A673 (cell line): ENCODE measurements at regions of chr15 and their contacts with region 1.

Region 1: DNA sequence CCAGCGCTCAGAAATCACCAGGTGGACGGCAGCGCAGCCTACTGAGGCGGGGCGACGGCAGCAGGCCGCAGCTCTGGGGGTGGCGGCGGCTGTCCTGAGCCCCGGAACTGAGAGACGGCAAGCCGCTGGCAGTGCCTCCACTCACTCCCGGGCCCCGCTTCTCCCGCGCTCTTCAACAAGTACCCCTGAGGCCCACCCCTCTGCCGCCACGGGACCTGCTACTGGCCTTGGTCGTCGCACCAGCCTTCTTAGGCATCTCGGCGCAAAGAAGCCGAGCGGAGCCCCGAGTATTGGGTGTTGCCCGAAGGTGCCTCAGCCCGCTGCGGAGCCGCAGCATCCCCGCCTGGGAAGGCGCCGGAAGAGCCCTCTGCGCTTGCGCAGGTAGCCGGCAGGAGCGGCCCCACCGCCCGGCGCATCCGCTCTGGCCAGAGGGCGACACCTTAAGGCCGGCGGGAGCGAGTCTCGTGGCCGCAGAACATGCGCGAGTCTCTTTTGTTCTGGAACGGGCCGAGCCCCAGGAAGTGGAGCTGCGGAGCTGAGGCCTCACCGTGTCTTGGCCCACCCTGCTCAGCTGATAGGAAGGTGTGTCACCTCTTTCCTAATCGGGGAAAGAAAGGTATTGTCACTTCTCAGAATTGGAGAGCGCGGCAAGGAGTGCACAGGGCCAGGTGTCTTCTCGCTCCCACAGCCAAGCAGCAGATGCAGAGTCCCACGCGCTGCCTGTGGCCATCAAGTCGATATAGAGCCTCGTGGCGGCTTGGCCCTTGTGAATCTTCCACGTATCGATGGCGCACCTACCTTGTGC is at the start of gene C15orf40:
- DNase-seq: peak; percentile 88
- H3K4me3 ChIP-seq: peak within 1 kb of the TSS; percentile 83
- H3K27ac ChIP-seq: peak within 1 kb of the TSS; percentile 62
- H3K4me1 ChIP-seq: peaks cover 17% of the 10 kb centered on the region
- H3K27me3 ChIP-seq: no peaks in the 10 kb centered on the region
- CTCF ChIP-seq: peak; percentile 69
- total RNA-seq, gene C15orf40: 20.6 and 30.6 TPM in 2 replicates

Region 2: GRCh38 chr15:82909080-82909815 is 102.2 kb before region 1 on chr15:
- CTCF ChIA-PET with region 1: no interaction called
- POLR2A ChIA-PET with region 1: no interaction called
- intact Hi-C with region 1: no loop called
- DNase-seq: no peak
- H3K4me3 ChIP-seq: no peak overlapping the region
- H3K27ac ChIP-seq: no peak overlapping the region
- H3K4me1 ChIP-seq: no peaks in the 10 kb centered on the region
- H3K27me3 ChIP-seq: peaks cover 7% of the 10 kb centered on the region
- CTCF ChIP-seq: no peak

Region 3: GRCh38 chr15:83108266-83109226 is 97.1 kb after region 1 on chr15:
- CTCF ChIA-PET with region 1: no interaction called
- POLR2A ChIA-PET with region 1: no interaction called
- intact Hi-C with region 1: loop called (anchors 5 kb)
- DNase-seq: peak; percentile 58
- H3K4me3 ChIP-seq: peak overlapping the region; percentile 58
- H3K27ac ChIP-seq: no peak overlapping the region
- H3K4me1 ChIP-seq: peaks cover 10% of the 10 kb centered on the region
- H3K27me3 ChIP-seq: no peaks in the 10 kb centered on the region
- CTCF ChIP-seq: no peak

Region 4: GRCh38 chr15:83207622-83208411 is 196.3 kb after region 1 on chr15 and contains the start of gene HDGFL3:
- CTCF ChIA-PET with region 1: interaction called, 4 read pairs
- POLR2A ChIA-PET with region 1: no interaction called
- intact Hi-C with region 1: loop called (anchors 2 kb)
- DNase-seq: peak; percentile 71
- H3K4me3 ChIP-seq: peak within 1 kb of the TSS; percentile 86
- H3K27ac ChIP-seq: peak within 1 kb of the TSS; percentile 85
- H3K4me1 ChIP-seq: peaks cover 3% of the 10 kb centered on the region
- H3K27me3 ChIP-seq: peaks cover 5% of the 10 kb centered on the region
- CTCF ChIP-seq: peak; percentile 26; the same call in 1 of the 2 replicates
- total RNA-seq, gene HDGFL3: 103 TPM in 2 replicates

Region 5: DNA sequence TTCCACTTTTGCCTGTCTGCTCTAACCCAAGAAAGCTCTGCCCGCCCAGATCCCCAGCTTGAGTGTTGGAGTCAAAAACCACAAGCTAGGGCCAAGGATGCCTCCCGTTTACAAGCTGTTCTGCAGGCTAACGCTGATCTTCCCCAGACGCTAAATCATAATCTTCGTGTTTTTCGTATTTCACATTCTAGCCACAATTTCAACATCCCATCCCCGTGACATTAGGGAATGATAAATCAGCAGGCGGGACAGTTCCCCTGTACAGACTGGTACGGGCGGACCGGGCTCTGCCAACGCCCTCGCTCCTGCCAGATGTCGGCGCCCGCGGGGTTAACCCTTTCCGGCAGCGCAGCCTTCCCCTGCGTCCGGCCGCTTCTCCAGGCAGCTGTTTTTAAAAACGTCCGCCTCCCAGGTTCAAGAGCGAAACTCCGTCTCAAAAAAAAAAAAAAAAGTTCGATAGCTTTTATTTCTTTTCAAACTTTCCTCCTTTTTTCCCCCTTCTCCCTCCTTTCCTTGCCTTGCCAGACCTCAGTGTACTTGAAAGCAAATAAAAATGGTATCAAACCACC is 354.0 kb after region 1 on chr15:
- CTCF ChIA-PET with region 1: no interaction called
- POLR2A ChIA-PET with region 1: no interaction called
- intact Hi-C with region 1: no loop called
- DNase-seq: peak; percentile 25
- H3K4me3 ChIP-seq: peak overlapping the region; percentile 24
- H3K27ac ChIP-seq: no peak overlapping the region
- H3K4me1 ChIP-seq: no peaks in the 10 kb centered on the region
- H3K27me3 ChIP-seq: peaks cover 43% of the 10 kb centered on the region
- CTCF ChIP-seq: no peak